T-cell (primary cell): ENCODE measurements at regions of chr3 and their contacts with region 1.

Region 1: DNA sequence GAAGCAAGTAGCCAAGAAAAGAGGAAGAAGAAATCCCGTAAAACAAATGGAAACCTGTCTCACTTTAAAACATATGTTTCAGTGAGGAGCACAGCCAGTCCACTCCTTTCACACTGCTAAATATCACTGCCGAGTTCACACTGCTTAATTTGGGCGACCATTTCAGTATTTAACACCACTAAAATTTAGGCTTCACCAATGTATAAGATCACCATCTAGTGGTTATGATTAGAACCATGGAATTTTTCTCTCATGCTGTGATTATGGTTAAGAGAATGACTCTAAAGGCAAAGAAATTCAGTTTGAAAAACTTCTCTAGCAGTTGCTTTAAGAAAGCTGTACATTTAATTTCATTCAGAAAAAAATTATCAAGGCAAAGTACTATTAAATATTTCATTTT is 16.6 kb downstream of the SLC4A7 start:
- DNase-seq: peak in 2 of 35 experiments; percentile 15 to 66
- ATAC-seq: peak; percentile 75 to 92 (median 84)
- H3K4me3 ChIP-seq: no peak overlapping the region
- H3K4me3 Mint-ChIP-seq: no peak overlapping the region
- H3K27ac ChIP-seq: no peak overlapping the region
- H3K27ac Mint-ChIP-seq: no peak overlapping the region
- H3K4me1 ChIP-seq: peaks cover 0 to 4% of the 10 kb centered on the region in 2 experiments
- H3K4me1 Mint-ChIP-seq: peaks cover 20 to 45% (median 32%) of the 10 kb centered on the region in 3 donors
- H3K27me3 ChIP-seq: no peaks in the 10 kb centered on the region
- H3K27me3 Mint-ChIP-seq: no peaks in the 10 kb centered on the region

Region 2: GRCh38 chr3:27134165-27134796 is 333.3 kb before region 1 on chr3:
- CTCF ChIA-PET with region 1: interaction called in 1 of 2 experiments, 11 read pairs
- POLR2A ChIA-PET with region 1: no interaction called
- DNase-seq: peak; percentile 13 to 74 (median 41)
- ATAC-seq: peak; percentile 56 to 84 (median 66)
- H3K4me3 ChIP-seq: no peak overlapping the region
- H3K4me3 Mint-ChIP-seq: no peak overlapping the region
- H3K27ac ChIP-seq: no peak overlapping the region
- H3K27ac Mint-ChIP-seq: no peak overlapping the region
- H3K4me1 ChIP-seq: no peaks in the 10 kb centered on the region
- H3K4me1 Mint-ChIP-seq: no peaks in the 10 kb centered on the region
- H3K27me3 ChIP-seq: no peaks in the 10 kb centered on the region
- H3K27me3 Mint-ChIP-seq: peaks cover 4 to 6% of the 10 kb centered on the region in 2 donors

Region 3: DNA sequence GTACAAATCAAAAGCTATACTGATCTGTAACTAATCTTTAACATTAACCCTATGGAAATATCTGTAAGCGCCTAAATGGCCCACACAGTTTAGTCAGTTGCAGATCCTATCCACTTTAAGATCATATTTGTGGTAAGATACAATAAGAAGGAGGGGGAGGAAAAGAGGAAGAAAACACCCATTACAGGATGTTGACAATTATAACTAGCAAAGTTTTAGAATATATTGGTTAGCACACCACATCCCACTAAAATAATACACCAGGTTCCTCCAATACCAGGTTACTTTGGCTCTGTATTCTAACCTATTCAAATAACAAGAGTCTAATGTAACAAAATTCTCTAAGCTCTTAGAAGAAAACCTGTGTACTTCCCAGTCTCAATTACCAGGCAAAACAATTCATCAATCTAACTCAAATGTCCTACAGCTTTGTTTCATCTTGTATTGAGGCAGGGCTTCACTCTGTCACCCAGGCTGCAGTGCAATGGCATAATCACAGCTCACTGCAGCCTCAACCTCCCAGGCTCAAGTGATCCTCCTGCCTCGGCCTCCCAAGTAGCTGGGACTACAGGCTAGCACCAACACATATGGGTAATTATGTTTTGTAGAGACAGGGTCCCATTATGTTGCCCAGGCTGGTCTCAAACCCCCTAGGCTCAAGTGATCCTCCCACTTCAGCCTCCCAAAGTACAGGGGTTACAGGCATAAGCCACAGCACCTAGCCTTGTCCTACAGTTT is 12.4 kb after region 1 on chr3:
- CTCF ChIA-PET with region 1: interaction called, 3 to 15 read pairs
- POLR2A ChIA-PET with region 1: interaction called, 4 to 11 read pairs
- DNase-seq: peak in 1 of 35 experiments; percentile 34
- ATAC-seq: peak in 2 of 4 experiments; percentile 10
- H3K4me3 ChIP-seq: peak overlapping the region in 1 of 2 donors; percentile 4
- H3K4me3 Mint-ChIP-seq: peak overlapping the region; percentile 70 to 100 (median 71)
- H3K27ac ChIP-seq: peak overlapping the region; percentile 71
- H3K27ac Mint-ChIP-seq: peak overlapping the region; percentile 95 to 96
- H3K4me1 ChIP-seq: peaks cover 28 to 40% of the 10 kb centered on the region in 2 experiments
- H3K4me1 Mint-ChIP-seq: peaks cover 71 to 77% (median 74%) of the 10 kb centered on the region in 3 donors
- H3K27me3 ChIP-seq: no peaks in the 10 kb centered on the region
- H3K27me3 Mint-ChIP-seq: no peaks in the 10 kb centered on the region

Region 4: DNA sequence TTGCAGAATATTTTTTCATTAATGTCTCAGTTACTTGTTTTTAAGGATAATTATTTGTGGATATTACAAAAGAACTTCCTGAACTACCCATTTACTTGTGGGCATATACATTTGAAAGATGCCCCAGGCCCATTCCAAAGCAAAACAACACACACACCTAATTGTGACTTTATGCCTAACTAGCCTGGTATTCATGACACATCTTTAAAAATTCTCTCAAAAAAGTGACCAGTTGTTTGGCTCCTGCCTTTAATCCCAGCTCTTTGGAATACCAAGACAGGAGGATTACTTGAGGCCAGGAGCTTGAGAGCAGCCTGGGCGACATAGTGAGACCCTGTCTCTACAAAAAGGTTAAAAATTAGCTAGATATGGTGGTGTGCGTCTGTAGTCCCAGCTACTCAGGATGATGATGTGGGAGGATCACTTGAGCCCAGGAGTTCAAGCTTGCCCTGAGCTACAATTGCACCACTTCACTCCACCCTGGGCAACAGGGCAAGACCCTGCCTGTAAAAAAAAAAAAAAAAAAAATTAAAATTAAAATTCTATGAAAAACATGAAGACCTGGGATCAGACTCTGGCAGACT is 68.4 kb after region 1 on chr3:
- CTCF ChIA-PET with region 1: no interaction called
- POLR2A ChIA-PET with region 1: interaction called in 1 of 2 experiments, 13 read pairs
- DNase-seq: no peak
- ATAC-seq: no peak
- H3K4me3 ChIP-seq: no peak overlapping the region
- H3K4me3 Mint-ChIP-seq: no peak overlapping the region
- H3K27ac ChIP-seq: no peak overlapping the region
- H3K27ac Mint-ChIP-seq: no peak overlapping the region
- H3K4me1 ChIP-seq: peaks cover 0 to 17% of the 10 kb centered on the region in 2 experiments
- H3K4me1 Mint-ChIP-seq: peaks cover 17 to 27% (median 18%) of the 10 kb centered on the region in 3 donors
- H3K27me3 ChIP-seq: peaks cover 0 to 3% of the 10 kb centered on the region in 2 experiments
- H3K27me3 Mint-ChIP-seq: peaks cover 0 to 3% of the 10 kb centered on the region in 2 donors

Region 5: GRCh38 chr3:27976933-27977332 is 509.4 kb after region 1 on chr3:
- CTCF ChIA-PET with region 1: no interaction called
- POLR2A ChIA-PET with region 1: no interaction called
- DNase-seq: no peak
- ATAC-seq: no peak
- H3K4me3 ChIP-seq: no peak overlapping the region
- H3K4me3 Mint-ChIP-seq: no peak overlapping the region
- H3K27ac ChIP-seq: no peak overlapping the region
- H3K27ac Mint-ChIP-seq: no peak overlapping the region
- H3K4me1 ChIP-seq: no peaks in the 10 kb centered on the region
- H3K4me1 Mint-ChIP-seq: peaks cover 0 to 6% (median 0%) of the 10 kb centered on the region in 3 donors
- H3K27me3 ChIP-seq: no peaks in the 10 kb centered on the region
- H3K27me3 Mint-ChIP-seq: no peaks in the 10 kb centered on the region